ENCODE measurements at regions of chr5 and their contacts with region 1.

Region 1: DNA sequence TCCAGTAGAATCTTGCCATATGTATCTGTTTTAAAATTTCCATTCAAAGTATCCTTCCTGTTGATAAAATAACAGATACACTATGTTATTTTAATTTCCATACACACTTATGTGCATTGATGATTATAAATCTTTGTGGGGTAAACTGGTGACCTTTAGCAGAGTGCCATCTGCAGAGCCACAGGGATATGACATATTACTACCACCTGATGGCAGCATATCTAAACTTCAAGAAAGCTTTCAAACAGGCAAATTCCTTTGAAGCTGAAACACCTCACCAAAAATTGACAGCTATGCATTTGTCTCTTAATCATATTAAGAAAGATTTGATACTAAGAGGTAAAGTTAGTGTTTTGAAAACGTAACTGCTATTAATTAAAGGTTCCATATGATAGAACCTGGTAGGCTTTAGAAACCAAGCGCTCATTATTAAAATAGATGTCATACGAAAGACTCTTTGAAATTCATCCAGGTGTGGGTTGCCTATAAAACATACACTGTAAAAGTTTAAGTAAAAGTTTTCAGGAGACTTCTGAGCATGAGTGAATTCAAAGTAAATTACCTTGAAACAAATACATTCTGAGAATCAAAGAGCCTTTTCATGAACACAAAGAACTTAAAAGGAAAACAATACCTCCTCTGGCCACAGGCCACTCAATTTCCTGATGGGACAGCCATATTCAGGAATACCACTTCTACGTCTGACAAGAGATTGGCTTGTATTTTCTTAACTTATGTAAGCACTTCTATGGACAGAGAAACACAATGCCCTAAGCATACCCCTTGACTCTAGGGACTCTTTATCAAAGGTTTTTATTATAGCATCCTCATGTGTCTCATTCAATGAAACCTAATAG is 93.3 kb downstream of the KIAA0825 start:
- DNase-seq: peak; percentile 50 to 70 (median 68)
- H3K4me3 ChIP-seq: no peak overlapping the region
- H3K27ac ChIP-seq: no peak overlapping the region
- H3K4me1 ChIP-seq: no peaks in the 10 kb centered on the region
- H3K27me3 ChIP-seq: no peaks in the 10 kb centered on the region

Region 2: DNA sequence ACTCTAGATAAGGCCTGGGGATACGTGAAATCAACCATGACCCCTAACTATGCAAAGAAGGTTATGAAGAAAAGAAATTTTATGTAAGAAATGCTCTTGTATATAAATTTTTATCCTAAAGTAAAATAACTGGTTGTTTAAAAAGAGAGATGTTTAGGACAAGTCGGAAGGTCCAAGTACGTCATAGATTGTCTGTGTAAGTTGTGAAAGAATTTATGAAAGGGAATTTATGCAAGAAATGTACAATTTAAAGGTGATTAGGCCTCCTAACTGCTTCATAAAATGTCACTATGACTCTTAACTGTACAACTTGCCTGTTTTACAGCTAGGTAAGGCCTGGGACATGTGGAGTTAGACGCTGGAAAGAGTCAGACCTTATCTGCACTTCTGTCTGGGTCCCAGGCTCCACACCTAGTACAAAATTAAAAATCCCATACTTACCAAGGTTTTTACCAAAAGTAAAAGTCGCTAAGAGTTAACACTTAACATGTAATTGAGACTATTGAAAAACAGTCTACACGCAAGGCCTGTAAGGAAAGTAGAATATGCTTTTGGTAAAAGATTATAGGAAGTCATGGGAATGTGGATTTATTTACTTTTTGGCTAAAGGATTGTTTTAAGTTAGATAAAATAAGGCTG is 15.9 kb after region 1 on chr5:
- CTCF ChIA-PET with region 1: interaction called, 10 read pairs
- POLR2A ChIA-PET with region 1: no interaction called
- DNase-seq: peak in 1 of 3 donors; percentile 13
- H3K4me3 ChIP-seq: no peak overlapping the region
- H3K27ac ChIP-seq: no peak overlapping the region
- H3K4me1 ChIP-seq: peaks cover 0 to 23% (median 19%) of the 10 kb centered on the region in 4 experiments
- H3K27me3 ChIP-seq: no peaks in the 10 kb centered on the region

Region 3: GRCh38 chr5:94627191-94627590 is 102.1 kb after region 1 on chr5:
- CTCF ChIA-PET with region 1: no interaction called
- POLR2A ChIA-PET with region 1: no interaction called
- DNase-seq: no peak
- H3K4me3 ChIP-seq: no peak overlapping the region
- H3K27ac ChIP-seq: no peak overlapping the region
- H3K4me1 ChIP-seq: peaks cover 0 to 3% (median 0%) of the 10 kb centered on the region in 4 experiments
- H3K27me3 ChIP-seq: no peaks in the 10 kb centered on the region

Region 4: GRCh38 chr5:94740286-94740685 is 215.2 kb after region 1 on chr5:
- CTCF ChIA-PET with region 1: interaction called, 13 read pairs
- POLR2A ChIA-PET with region 1: no interaction called
- DNase-seq: no peak
- H3K4me3 ChIP-seq: no peak overlapping the region
- H3K27ac ChIP-seq: no peak overlapping the region
- H3K4me1 ChIP-seq: peaks cover 0 to 18% (median 5%) of the 10 kb centered on the region in 4 experiments
- H3K27me3 ChIP-seq: no peaks in the 10 kb centered on the region

Measured in common myeloid progenitor, CD34-positive (primary cell).